OCI-LY7 (cell line): ENCODE measurements at regions of chr3 and their contacts with region 1.

Region 1: DNA sequence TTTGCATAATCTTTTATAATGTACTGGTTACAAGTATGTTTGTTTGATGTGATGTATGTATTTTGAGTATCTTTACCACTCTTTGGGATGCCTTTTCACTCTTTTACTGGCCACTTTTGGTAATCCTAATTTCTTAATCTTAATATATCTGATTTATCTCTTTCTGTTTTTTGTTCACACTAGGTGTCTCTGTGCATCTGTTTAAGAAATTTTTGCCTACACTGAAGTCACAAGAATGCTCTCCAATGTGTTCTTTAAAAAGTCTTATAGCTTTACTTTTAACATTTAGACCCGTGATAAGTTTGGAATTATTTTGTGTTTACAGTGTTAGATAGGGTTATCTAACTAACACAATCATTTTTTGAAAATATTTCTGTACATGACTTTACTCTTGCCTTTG is 659.1 kb downstream of the SI start:
- DNase-seq: no peak
- H3K4me3 ChIP-seq: no peak overlapping the region
- H3K27ac ChIP-seq: no peak overlapping the region
- H3K4me1 ChIP-seq: no peaks in the 10 kb centered on the region
- CTCF ChIP-seq: no peak

Region 2: DNA sequence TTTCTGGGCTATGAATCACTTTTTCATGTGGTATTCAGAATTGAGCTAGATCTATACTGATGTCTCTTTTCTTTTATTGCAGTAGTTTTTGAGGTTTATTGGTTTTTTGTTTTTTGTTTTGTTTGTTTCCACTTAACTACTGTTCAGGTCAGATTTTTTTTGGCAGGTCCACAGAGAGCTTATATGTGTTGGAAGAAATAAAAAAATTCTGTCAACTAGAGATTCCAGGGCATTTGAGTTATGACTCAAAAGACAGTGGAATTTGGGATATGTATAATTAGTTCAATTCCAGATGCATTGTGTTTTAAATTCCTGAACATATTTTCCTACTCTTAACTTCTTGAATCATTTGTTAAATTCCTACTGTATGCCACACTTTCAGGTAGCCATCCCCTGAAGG is 68.1 kb before region 1 on chr3:
- CTCF ChIA-PET with region 1: no interaction called
- POLR2A ChIA-PET with region 1: no interaction called
- intact Hi-C with region 1: no loop called
- DNase-seq: no peak
- H3K4me3 ChIP-seq: no peak overlapping the region
- H3K27ac ChIP-seq: no peak overlapping the region
- H3K4me1 ChIP-seq: no peaks in the 10 kb centered on the region
- CTCF ChIP-seq: no peak

Region 3: DNA sequence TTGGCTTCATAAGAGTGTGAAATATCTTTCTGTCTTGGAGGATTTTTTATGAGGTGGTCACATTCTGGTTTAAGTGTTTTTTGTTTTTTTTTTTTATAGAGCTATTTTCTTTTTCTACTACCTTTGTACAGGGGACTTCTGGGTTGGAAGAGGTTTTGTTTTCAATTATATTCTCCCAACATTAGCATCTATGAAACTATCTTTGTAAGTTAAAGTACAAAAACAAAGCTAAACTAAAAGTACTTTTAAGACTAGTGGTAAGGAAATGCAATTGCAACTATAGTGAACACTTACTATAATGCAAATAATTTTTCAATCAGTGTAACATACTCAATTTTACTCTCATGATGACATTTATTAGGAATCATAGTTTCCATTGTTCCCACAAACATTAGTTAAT is 29.2 kb before region 1 on chr3:
- CTCF ChIA-PET with region 1: no interaction called
- POLR2A ChIA-PET with region 1: no interaction called
- intact Hi-C with region 1: loop called (anchors 1 kb)
- DNase-seq: no peak
- H3K4me3 ChIP-seq: no peak overlapping the region
- H3K27ac ChIP-seq: no peak overlapping the region
- H3K4me1 ChIP-seq: no peaks in the 10 kb centered on the region
- CTCF ChIP-seq: peak; percentile 66

Region 4: GRCh38 chr3:164401923-164402322 is 17.3 kb before region 1 on chr3:
- CTCF ChIA-PET with region 1: no interaction called
- POLR2A ChIA-PET with region 1: no interaction called
- intact Hi-C with region 1: no loop called
- DNase-seq: no peak
- H3K4me3 ChIP-seq: no peak overlapping the region
- H3K27ac ChIP-seq: no peak overlapping the region
- H3K4me1 ChIP-seq: no peaks in the 10 kb centered on the region
- CTCF ChIP-seq: no peak

Region 5: DNA sequence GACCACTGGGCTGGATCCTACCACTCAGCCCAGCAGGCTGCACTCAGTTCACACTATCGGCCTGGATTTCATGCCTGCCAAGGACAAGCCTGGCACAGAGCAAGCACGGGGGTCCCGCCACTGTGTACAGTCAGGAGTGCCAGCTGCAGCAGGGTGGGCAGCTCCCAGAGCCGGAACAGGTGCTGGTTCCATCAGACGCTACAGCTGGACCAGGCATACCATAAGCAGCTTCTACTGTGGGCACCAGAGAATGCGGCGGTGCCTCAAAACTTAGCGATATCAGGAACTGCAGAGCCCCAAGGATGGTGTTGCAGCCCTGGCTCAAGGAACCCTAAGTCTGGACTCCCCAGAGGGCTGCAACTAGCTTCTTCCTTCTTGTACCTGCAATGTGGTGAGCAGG is 1293.2 kb after region 1 on chr3:
- CTCF ChIA-PET with region 1: no interaction called
- POLR2A ChIA-PET with region 1: no interaction called
- intact Hi-C with region 1: no loop called
- DNase-seq: no peak
- H3K4me3 ChIP-seq: no peak overlapping the region
- H3K27ac ChIP-seq: no peak overlapping the region
- H3K4me1 ChIP-seq: no peaks in the 10 kb centered on the region
- CTCF ChIP-seq: no peak